HCT116 (cell line): ENCODE measurements at regions of chr22 and their contacts with region 1.

Region 1: GRCh38 chr22:39240828-39241793 is 3.7 kb downstream of the PDGFB start:
- DNase-seq: peak; percentile 64
- ATAC-seq: peak; percentile 41
- H3K4me3 ChIP-seq: peak overlapping the region; percentile 80 to 96
- H3K27ac ChIP-seq: peak overlapping the region; percentile 94
- H3K4me1 ChIP-seq: peaks cover 52 to 75% of the 10 kb centered on the region in 2 experiments
- H3K27me3 ChIP-seq: no peaks in the 10 kb centered on the region
- CTCF ChIP-seq: no peak
- POLR2A ChIP-seq: no peak
- RAD21 ChIP-seq: no peak

Region 2: DNA sequence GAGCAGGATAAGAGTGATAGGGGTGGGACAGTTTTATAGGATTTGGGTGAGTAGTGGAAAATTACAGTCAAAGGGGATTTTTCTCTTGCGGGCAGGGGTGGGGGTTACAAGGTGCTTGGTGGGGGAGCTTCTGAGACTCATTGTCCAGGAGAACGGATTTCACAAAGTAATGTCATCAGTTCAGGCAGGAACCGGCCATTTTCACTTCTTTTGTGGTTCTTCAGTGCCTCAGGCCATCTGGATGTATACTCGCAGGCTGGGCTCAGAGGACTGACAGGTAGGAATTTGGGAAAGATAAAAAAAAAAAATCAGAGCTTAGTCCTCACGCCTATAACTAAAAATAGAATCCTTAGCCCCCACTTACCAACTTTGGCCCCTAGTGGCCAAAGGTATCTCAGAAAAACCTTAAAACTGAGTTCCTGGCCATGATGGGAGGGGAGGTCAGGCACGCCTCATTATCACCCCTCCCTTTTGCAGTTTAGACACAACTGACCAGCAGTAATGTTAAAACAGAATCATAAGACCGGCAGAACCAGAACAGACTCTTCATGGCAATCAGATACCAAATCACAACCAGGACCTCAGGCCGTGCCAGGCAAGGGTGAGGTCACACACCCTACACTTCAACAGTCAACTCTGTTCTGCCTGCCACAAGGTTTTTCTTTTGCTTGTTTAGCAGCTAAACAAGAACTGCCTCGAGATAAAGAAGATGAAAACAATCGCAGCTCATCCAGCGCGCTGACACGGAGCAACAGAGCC is 172.9 kb before region 1 on chr22:
- CTCF ChIA-PET with region 1: no interaction called
- POLR2A ChIA-PET with region 1: no interaction called
- RAD21 ChIA-PET with region 1: no interaction called
- intact Hi-C with region 1: no loop called
- DNase-seq: no peak
- ATAC-seq: 0 out of 2 replicates have a peak, but pooled peaks have one; percentile 36
- H3K4me3 ChIP-seq: no peak overlapping the region
- H3K27ac ChIP-seq: no peak overlapping the region
- H3K4me1 ChIP-seq: peaks cover 6 to 8% of the 10 kb centered on the region in 2 experiments; a peak in 2 of 4 replicates
- H3K27me3 ChIP-seq: no peaks in the 10 kb centered on the region
- CTCF ChIP-seq: peak in 2 of 3 experiments; percentile 21 to 22; a peak in 2 of 6 replicates
- POLR2A ChIP-seq: no peak
- RAD21 ChIP-seq: no peak

Region 3: DNA sequence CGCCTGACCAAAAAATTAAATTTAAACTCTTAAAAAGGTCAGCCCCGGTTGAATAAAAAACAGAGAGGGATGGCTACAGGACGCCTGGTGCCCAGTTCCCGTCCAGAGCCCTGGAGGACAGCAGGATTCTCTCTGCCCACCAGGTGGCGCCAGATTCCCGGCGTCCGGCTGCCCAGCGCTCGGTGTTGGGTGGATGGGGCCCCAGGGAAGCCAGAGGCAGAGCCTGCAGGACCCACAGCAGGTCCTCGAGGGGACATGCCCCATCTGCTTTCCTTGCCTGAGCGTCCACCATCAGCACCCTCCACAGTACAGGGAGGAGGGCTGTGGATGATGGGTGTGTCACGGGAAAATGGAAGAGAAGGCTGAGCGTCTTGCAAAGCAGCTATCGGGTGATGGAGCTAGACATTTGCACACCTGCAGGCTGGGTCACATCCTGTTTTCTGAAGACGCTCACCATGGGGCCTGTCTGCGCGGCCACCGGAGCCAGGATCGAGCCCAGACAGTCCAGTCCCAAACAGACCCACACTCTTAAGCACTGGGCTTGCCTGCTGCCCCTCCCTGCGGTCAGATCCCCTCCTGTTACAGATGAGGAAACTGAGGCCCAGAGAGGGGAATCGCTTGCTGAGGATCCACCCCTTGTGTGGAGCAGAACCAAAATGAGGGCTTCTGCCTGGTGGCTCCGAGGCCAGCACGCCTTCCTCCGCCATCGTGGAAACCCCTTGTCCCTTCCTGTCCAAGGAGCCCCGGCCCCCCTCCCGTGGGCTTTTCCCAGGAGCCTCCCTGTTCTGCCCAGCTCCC is 70.1 kb before region 1 on chr22:
- CTCF ChIA-PET with region 1: interaction called, 4 read pairs
- POLR2A ChIA-PET with region 1: interaction called, 3 read pairs
- RAD21 ChIA-PET with region 1: interaction called in 1 of 2 experiments, 3 read pairs
- intact Hi-C with region 1: loop called (anchors 1 kb)
- DNase-seq: peak; percentile 50
- ATAC-seq: peak; percentile 87
- H3K4me3 ChIP-seq: no peak overlapping the region
- H3K27ac ChIP-seq: no peak overlapping the region
- H3K4me1 ChIP-seq: peaks cover 28 to 46% of the 10 kb centered on the region in 2 experiments
- H3K27me3 ChIP-seq: no peaks in the 10 kb centered on the region
- CTCF ChIP-seq: peak; percentile 90 to 97 (median 92)
- POLR2A ChIP-seq: no peak
- RAD21 ChIP-seq: peak; percentile 100

Region 4: DNA sequence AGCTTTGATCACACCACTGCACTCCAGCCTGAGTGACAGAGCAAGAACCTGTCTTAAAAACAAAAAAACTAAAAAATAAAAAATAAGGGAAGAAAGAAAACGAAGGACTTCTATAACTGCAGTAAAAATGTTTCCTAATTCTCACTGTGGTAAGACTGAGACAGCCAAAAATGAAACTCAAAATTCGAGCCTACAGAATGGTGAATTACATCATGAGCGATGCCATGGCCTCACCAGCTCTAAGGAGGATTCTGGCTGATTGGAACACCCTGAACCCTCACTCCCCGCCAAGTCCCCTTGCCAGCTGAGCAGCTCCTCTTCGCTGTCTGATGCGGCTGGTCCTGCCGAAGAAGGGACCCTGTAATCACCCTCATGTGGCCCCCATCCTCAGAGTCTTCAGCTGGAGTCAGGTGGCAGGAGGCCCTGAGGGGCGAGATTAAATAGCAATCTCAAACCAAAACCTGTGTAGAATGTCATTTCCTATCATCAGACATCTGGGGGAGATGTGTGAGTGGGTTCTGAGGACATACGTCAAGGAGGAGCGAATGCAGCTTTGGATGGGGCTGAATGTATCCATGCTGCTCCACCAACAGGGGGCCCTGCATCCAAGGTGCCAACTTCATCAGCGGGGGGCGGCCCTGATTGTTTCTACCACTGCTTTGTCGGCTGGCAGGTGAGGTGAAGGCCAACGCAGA is 25.5 kb before region 1 on chr22:
- CTCF ChIA-PET with region 1: interaction called, 13 read pairs
- POLR2A ChIA-PET with region 1: interaction called, 7 read pairs
- RAD21 ChIA-PET with region 1: interaction called, 3 to 4 read pairs
- intact Hi-C with region 1: no loop called
- DNase-seq: peak; percentile 35
- ATAC-seq: peak; percentile 42
- H3K4me3 ChIP-seq: no peak overlapping the region
- H3K27ac ChIP-seq: peak overlapping the region; percentile 58; the same call in 1 of the 2 replicates
- H3K4me1 ChIP-seq: peaks cover 46 to 57% of the 10 kb centered on the region in 2 experiments
- H3K27me3 ChIP-seq: no peaks in the 10 kb centered on the region
- CTCF ChIP-seq: peak; percentile 57 to 86 (median 73); a peak in 5 of 6 replicates
- POLR2A ChIP-seq: no peak
- RAD21 ChIP-seq: peak; percentile 62

Region 5: DNA sequence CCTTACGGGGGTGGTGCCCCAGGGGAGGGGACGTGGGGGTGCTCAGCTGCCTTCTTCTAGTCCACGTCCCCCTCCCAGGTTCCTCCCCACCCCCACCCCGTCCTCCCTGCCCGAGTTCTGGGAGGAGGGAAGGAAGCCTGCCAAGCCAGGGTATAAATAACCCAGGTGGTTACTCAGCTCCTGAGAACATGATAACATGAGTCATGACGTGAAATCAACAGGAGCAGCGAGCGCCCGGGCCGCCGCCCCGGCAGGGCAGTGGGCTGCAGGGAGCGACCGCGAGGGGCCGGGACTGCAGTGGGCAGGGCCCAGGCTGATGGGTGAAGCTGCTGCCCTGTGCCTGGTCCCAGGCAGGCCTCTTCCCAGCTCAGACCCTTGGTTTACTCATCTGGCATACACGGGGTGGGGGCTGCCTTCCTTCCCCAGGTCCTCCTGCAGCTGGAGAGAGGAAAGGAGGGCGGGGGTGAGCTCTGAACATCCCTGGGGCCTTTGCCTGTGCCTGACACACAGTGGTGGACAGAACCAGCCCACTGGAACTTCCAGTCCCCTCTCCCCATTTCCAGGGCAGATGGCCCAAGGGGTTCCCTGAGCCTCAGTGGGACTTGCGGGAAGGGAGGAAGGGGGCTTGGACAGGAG is 12.4 kb after region 1 on chr22:
- CTCF ChIA-PET with region 1: interaction called, 3 read pairs
- POLR2A ChIA-PET with region 1: interaction called, 11 read pairs
- RAD21 ChIA-PET with region 1: no interaction called
- intact Hi-C with region 1: no loop called
- DNase-seq: peak; percentile 73
- ATAC-seq: peak; percentile 77
- H3K4me3 ChIP-seq: peak overlapping the region; percentile 30 to 54
- H3K27ac ChIP-seq: peak overlapping the region; percentile 62
- H3K4me1 ChIP-seq: peaks cover 35 to 57% of the 10 kb centered on the region in 2 experiments
- H3K27me3 ChIP-seq: no peaks in the 10 kb centered on the region
- CTCF ChIP-seq: no peak
- POLR2A ChIP-seq: no peak
- RAD21 ChIP-seq: no peak

Region 6: DNA sequence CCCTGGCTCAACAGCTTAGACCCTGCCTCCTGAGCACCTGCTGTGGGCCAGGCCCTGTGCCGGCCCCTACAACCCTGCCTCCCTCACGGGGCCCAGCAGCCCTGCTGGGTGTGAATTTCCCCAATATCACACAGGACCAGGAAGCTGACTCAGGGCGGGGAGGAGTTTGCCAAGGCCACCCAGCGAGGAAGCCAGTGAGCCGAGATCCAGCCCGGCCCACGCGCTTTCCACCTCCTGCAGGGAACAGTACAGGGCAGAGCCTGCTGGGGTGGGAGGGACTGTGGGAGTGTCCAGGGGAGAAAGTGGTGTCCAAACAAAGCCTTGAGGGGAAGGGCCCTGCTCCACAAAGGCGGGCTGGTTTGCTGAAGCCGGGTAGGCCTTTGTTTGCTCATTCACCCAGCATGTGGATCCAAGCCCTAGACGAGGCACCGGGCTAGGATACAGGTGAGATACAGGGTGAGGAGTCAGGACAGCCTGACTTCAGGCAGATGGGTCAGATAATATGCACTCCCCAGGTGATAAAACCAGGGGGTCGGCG is 51.5 kb after region 1 on chr22:
- CTCF ChIA-PET with region 1: interaction called, 3 read pairs
- POLR2A ChIA-PET with region 1: interaction called, 14 read pairs
- RAD21 ChIA-PET with region 1: no interaction called
- intact Hi-C with region 1: loop called (anchors 5 kb)
- DNase-seq: peak; percentile 93
- ATAC-seq: peak; percentile 82
- H3K4me3 ChIP-seq: peak overlapping the region; percentile 18 to 41
- H3K27ac ChIP-seq: peak overlapping the region; percentile 98
- H3K4me1 ChIP-seq: peaks cover 61 to 95% of the 10 kb centered on the region in 2 experiments
- H3K27me3 ChIP-seq: no peaks in the 10 kb centered on the region
- CTCF ChIP-seq: no peak
- POLR2A ChIP-seq: peak; percentile 86
- RAD21 ChIP-seq: no peak

Region 7: GRCh38 chr22:40289991-40290459 is 1048.9 kb after region 1 on chr22:
- CTCF ChIA-PET with region 1: no interaction called
- POLR2A ChIA-PET with region 1: no interaction called
- RAD21 ChIA-PET with region 1: no interaction called
- intact Hi-C with region 1: no loop called
- DNase-seq: no peak
- ATAC-seq: no peak
- H3K4me3 ChIP-seq: no peak overlapping the region
- H3K27ac ChIP-seq: no peak overlapping the region
- H3K4me1 ChIP-seq: no peaks in the 10 kb centered on the region
- H3K27me3 ChIP-seq: no peaks in the 10 kb centered on the region
- CTCF ChIP-seq: no peak
- POLR2A ChIP-seq: no peak
- RAD21 ChIP-seq: no peak